ENCODE measurements at regions of chr19 and their contacts with region 1.

Region 1: DNA sequence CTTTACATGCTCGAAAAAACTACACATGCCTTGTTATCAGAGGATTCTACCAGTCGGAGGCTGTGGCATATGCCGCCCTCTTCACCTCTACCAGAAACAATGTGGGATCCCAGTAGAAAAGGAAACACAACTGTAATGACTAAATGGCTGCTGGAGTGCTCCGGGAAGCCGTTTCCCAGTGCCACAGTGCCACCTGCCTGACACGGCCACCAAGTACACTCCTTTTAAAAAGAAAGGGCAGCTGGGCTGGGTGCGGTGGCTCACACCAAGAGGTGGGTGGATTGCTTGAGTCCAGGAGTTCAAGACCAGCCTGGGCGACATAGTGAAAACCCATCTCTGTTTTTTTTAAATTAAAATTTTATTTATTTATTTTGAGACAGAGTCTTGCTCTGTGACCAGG is 67.3 kb downstream of the TRPM4 start:
- DNase-seq: no peak
- ATAC-seq: peak; percentile 54
- H3K4me3 Mint-ChIP-seq: no peak overlapping the region
- H3K27ac Mint-ChIP-seq: no peak overlapping the region
- H3K4me1 Mint-ChIP-seq: peaks cover 6% of the 10 kb centered on the region
- H3K27me3 Mint-ChIP-seq: peaks cover 6% of the 10 kb centered on the region
- CTCF ChIP-seq: no peak

Region 2: DNA sequence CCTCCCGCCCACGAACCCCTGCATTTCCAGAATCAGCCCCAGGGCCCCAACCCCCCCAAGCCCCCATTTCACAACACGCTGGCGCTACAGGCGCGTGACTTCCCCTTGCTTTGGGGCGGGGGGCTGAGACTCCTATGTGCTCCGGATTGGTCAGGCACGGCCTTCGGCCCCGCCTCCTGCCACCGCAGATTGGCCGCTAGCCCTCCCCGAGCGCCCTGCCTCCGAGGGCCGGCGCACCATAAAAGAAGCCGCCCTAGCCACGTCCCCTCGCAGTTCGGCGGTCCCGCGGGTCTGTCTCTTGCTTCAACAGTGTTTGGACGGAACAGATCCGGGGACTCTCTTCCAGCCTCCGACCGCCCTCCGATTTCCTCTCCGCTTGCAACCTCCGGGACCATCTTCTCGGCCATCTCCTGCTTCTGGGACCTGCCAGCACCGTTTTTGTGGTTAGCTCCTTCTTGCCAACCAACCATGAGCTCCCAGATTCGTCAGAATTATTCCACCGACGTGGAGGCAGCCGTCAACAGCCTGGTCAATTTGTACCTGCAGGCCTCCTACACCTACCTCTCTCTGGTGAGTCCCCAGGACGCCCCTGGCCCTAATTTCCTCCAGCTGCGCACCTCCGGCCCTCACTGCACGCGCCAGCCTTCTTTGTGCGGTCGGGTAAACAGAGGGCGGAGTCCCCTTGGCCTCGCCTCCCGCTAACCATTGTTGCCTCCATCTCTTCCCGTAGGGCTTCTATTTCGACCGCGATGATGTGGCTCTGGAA is 259.6 kb before region 1 on chr19 and contains the start of gene FTL:
- CTCF ChIA-PET with region 1: no interaction called
- POLR2A ChIA-PET with region 1: no interaction called
- intact Hi-C with region 1: no loop called
- DNase-seq: peak; percentile 88
- ATAC-seq: peak; percentile 80
- H3K4me3 Mint-ChIP-seq: peak within 1 kb of the TSS; percentile 99
- H3K27ac Mint-ChIP-seq: peak within 1 kb of the TSS; percentile 99
- H3K4me1 Mint-ChIP-seq: peaks cover 70% of the 10 kb centered on the region
- H3K27me3 Mint-ChIP-seq: no peaks in the 10 kb centered on the region
- CTCF ChIP-seq: no peak
- total RNA-seq, gene FTL: 888 and 935 TPM in 2 replicates

Region 3: GRCh38 chr19:49243129-49243528 is 18.3 kb after region 1 on chr19:
- CTCF ChIA-PET with region 1: no interaction called
- POLR2A ChIA-PET with region 1: no interaction called
- intact Hi-C with region 1: no loop called
- DNase-seq: no peak
- ATAC-seq: no peak
- H3K4me3 Mint-ChIP-seq: no peak overlapping the region
- H3K27ac Mint-ChIP-seq: no peak overlapping the region
- H3K4me1 Mint-ChIP-seq: no peaks in the 10 kb centered on the region
- H3K27me3 Mint-ChIP-seq: peaks cover 1% of the 10 kb centered on the region
- CTCF ChIP-seq: no peak

Region 4: DNA sequence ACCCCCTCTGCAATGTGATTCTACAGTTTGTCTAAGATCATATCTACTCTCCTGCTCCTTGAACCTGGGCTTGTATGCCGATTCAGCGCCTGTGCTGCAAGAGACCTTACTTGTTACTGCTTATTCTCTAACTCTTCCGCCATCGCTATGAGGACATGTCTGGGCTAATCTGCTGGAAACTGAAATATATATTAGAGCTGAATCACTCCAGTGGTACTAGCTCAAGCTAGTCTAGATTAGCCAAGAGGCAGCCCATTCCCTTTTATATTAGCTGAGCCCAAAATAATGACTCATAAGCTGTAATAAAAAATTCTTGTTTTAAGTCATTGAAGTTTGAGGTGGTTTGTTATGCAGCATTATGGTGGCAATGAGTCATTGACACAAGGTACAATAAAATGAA is 47.3 kb after region 1 on chr19:
- CTCF ChIA-PET with region 1: no interaction called
- POLR2A ChIA-PET with region 1: no interaction called
- intact Hi-C with region 1: loop called (anchors 2 kb)
- DNase-seq: no peak
- ATAC-seq: no peak
- H3K4me3 Mint-ChIP-seq: no peak overlapping the region
- H3K27ac Mint-ChIP-seq: no peak overlapping the region
- H3K4me1 Mint-ChIP-seq: no peaks in the 10 kb centered on the region
- H3K27me3 Mint-ChIP-seq: peaks cover 11% of the 10 kb centered on the region
- CTCF ChIP-seq: no peak